ENCODE measurements at regions of chr6 and their contacts with region 1.

Region 1: DNA sequence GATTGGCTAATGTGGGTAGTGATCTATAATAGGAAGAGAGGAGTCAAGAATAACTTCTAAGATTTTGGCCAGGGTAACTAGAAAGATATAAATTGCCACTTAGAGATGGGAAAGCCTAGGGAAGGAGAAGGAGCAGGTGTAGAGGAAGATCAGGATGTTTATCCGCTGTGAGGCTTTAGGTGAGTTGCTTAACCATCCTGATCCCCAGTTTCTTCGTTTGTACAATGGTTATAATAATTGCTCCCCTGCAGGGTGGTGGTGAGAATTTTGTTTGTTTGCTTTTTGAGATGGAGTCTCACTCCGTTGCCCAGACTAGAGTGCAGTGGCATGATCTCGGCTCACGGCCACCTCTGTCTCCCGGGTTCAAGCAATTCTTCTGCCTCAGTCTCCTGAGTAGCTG is 2.4 kb upstream of the MYMX start:
- DNase-seq: no peak
- H3K4me3 ChIP-seq: no peak overlapping the region
- H3K27ac ChIP-seq: no peak overlapping the region
- H3K4me1 ChIP-seq: peaks cover 11 to 31% (median 23%) of the 10 kb centered on the region in 4 donors
- H3K27me3 ChIP-seq: no peaks in the 10 kb centered on the region
- CTCF ChIP-seq: no peak
- EP300 ChIP-seq: no peak
- POLR2A ChIP-seq: no peak

Region 2: DNA sequence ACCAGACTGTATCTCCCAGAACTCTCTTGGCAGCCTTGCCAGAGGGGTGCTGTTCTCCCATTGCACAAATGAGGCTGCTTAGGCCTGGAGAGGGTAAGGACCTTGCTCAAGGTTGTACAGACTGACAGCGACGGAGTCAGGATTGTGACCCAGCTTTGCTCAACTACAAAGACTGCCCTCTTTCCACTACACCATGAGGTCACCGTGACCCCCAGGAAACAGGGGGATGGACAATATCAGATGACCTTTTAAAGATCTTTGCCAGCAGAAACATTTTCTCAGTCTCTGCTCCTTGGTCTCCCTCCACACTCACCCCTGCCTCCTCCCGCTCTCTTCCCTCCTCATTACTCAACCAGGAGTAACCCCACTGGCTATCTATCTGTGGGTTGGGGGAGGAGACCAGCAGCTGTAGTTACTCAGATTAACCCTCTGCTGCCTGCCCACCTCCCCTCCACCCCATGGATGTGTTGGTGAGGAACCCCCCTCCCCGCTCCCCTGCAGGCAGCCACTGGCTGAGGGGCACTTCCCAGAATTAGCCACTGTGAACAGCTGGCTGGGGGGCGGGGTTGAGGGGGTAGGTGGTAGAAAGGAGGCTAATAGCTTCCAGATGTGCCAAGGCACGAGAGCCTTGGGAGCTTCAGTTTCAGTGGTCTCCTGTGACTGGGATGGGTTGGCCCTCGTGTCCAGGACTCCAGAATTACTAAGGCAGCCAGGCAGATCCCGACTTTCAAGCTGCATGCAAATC is 499.8 kb before region 1 on chr6:
- in situ Hi-C with region 1: no loop called
- intact Hi-C with region 1: no loop called
- DNase-seq: peak; percentile 44
- H3K4me3 ChIP-seq: no peak overlapping the region
- H3K27ac ChIP-seq: peak overlapping the region in 2 of 4 donors; percentile 41 to 69
- H3K4me1 ChIP-seq: peaks cover 0 to 10% (median 4%) of the 10 kb centered on the region in 4 donors
- H3K27me3 ChIP-seq: no peaks in the 10 kb centered on the region
- CTCF ChIP-seq: no peak
- EP300 ChIP-seq: no peak
- POLR2A ChIP-seq: no peak

Region 3: GRCh38 chr6:44172731-44173500 is 41.4 kb before region 1 on chr6:
- in situ Hi-C with region 1: no loop called
- intact Hi-C with region 1: loop called (anchors 2 kb)
- DNase-seq: peak; percentile 87
- H3K4me3 ChIP-seq: no peak overlapping the region
- H3K27ac ChIP-seq: no peak overlapping the region
- H3K4me1 ChIP-seq: peaks cover 3 to 18% (median 10%) of the 10 kb centered on the region in 4 donors
- H3K27me3 ChIP-seq: no peaks in the 10 kb centered on the region
- CTCF ChIP-seq: peak; percentile 86 to 91 (median 89)
- EP300 ChIP-seq: no peak
- POLR2A ChIP-seq: no peak